Left colon (tissue), 2 donors: ENCODE measurements at regions of chr15 and their contacts with region 1.

Region 1: GRCh38 chr15:68875377-68876116 is 54.8 kb upstream of the SPESP1 start:
- DNase-seq: peak; percentile 77 to 95
- ATAC-seq: peak; percentile 96

Region 2: GRCh38 chr15:68550481-68551295 is 324.9 kb before region 1 on chr15:
- intact Hi-C with region 1: loop called (anchors 5 to 10 kb)
- DNase-seq: peak in 1 of 2 donors; percentile 83
- ATAC-seq: peak; percentile 54

Region 3: DNA sequence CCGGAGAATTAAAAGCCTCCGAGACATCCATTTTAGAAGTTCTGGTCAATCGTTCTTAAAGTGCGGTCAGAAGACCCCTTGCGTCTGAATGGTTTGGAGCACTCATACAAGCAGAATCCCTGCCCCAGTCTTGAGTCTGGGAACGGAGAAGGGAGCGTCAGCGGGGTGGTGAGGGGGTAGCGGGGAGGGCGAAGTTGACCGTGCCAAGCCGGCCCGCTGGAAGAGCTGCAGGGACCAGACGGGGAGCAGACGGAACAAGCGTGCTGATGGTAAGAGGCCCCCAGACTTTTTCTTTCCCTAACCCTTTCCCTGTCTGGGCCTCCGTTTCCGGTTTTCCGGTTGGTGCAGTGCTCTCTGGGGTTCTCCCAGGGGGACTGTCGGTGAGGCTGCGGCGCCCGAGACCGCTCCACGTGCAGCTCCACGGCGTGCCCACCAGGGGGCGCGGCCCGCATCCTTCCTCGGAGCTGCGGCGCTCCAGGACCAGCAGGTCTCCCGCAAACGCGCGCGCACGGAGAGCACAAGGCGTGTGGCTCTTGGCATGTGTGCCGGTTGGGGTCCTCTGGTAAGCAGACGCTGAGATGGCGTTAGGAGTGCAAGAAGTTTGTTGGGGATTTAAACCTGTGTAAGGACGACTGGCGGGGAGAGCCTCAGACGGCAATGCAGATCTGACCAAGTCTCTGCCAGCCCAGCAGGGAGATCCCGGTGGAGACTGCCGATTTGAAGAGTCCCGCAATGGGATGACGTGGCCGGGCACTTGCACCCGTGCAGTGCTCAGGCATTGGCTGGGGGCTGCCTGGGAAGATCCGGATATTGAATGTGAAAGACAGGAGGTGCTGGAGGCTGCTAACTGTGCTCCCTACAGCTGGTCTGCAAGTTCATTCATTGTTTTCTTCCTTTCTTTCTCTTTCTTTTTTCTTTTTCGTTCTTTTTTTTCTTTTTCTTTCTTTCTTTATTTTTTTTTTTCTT is 315.9 kb before region 1 on chr15:
- intact Hi-C with region 1: loop called (anchors 5 to 10 kb)
- DNase-seq: peak; percentile 47 to 76
- ATAC-seq: peak; percentile 93

Region 4: GRCh38 chr15:68730471-68730919 is 145.1 kb before region 1 on chr15:
- intact Hi-C with region 1: loop called in 1 of 2 experiments (anchors 5 kb)
- DNase-seq: peak in 1 of 2 donors; percentile 46
- ATAC-seq: peak; percentile 64

Region 5: GRCh38 chr15:68783226-68784058 is 92.1 kb before region 1 on chr15:
- intact Hi-C with region 1: loop called (anchors 10 kb)
- DNase-seq: peak; percentile 42 to 79
- ATAC-seq: peak; percentile 69

Region 6: DNA sequence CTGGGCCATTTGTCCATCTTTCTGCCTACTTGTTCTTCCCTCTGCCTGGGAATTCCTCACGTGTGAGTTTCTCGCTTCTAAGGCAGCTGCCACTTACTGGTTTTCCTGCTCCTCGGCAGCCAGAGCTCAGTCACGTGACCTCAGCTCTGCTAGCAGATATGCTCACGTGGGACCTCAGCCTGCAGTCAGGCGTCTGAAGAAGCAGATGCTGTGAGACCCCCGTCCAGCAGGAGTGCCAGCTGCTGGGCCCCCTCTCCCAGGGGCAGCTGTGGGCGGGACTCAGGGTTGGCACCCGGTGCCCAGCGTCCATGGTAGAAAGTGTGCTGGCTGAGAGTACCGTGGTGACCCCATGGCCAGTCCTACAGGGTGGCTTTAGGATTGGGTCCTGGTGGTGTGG is 1383.5 kb after region 1 on chr15:
- intact Hi-C with region 1: no loop called
- DNase-seq: peak; percentile 64 to 70
- ATAC-seq: peak; percentile 65